ENCODE measurements at regions of chr2 and their contacts with region 1.

Region 1: GRCh38 chr2:68157402-68158133 is at the start of gene PNO1:
- DNase-seq: peak; percentile 95 to 97 (median 96)
- H3K4me3 ChIP-seq: peak within 1 kb of the TSS; percentile 72
- H3K27ac ChIP-seq: peak within 1 kb of the TSS; percentile 91 to 94
- H3K4me1 ChIP-seq: peaks cover 2% of the 10 kb centered on the region
- H3K27me3 ChIP-seq: no peaks in the 10 kb centered on the region
- CTCF ChIP-seq: peak in 1 of 3 donors; percentile 46
- EP300 ChIP-seq: no peak
- POLR2A ChIP-seq: no peak
- total RNA-seq, gene PNO1: 8.9 to 26.4 (median 12.7) TPM

Region 2: GRCh38 chr2:68185541-68186164 is 28.1 kb after region 1 on chr2:
- intact Hi-C with region 1: no loop called
- DNase-seq: no peak
- H3K4me3 ChIP-seq: no peak overlapping the region
- H3K27ac ChIP-seq: no peak overlapping the region
- H3K4me1 ChIP-seq: peaks cover 3% of the 10 kb centered on the region
- H3K27me3 ChIP-seq: no peaks in the 10 kb centered on the region
- CTCF ChIP-seq: no peak
- EP300 ChIP-seq: no peak
- POLR2A ChIP-seq: no peak

Region 3: GRCh38 chr2:68251187-68251854 is 93.8 kb after region 1 on chr2:
- intact Hi-C with region 1: loop called in 1 of 4 experiments (anchors 5 kb)
- DNase-seq: peak; percentile 60 to 73 (median 65)
- H3K4me3 ChIP-seq: peak overlapping the region; percentile 82
- H3K27ac ChIP-seq: peak overlapping the region; percentile 89 to 96
- H3K4me1 ChIP-seq: peaks cover 15% of the 10 kb centered on the region
- H3K27me3 ChIP-seq: no peaks in the 10 kb centered on the region
- CTCF ChIP-seq: peak; percentile 52 to 83 (median 69)
- EP300 ChIP-seq: no peak
- POLR2A ChIP-seq: no peak